ENCODE measurements at regions of chr19 and their contacts with region 1.

Region 1: GRCh38 chr19:29610563-29611271 is 4.6 kb downstream of the POP4 start:
- DNase-seq: peak; percentile 85
- ATAC-seq: peak; percentile 77 to 82

Region 2: GRCh38 chr19:29067831-29068230 is 542.9 kb before region 1 on chr19:
- intact Hi-C with region 1: no loop called
- DNase-seq: no peak
- ATAC-seq: no peak

Region 3: GRCh38 chr19:29690842-29691241 is 80.1 kb after region 1 on chr19:
- intact Hi-C with region 1: no loop called
- DNase-seq: no peak
- ATAC-seq: peak in 1 of 2 donors; percentile 10

Region 4: GRCh38 chr19:29714953-29715700 is 104.4 kb after region 1 on chr19 and contains the start of gene C19orf12:
- intact Hi-C with region 1: loop called (anchors 1 to 5 kb)
- DNase-seq: peak; percentile 71
- ATAC-seq: peak; percentile 86 to 91
- total RNA-seq, gene C19orf12: 48.2 to 52.0 TPM

Region 5: DNA sequence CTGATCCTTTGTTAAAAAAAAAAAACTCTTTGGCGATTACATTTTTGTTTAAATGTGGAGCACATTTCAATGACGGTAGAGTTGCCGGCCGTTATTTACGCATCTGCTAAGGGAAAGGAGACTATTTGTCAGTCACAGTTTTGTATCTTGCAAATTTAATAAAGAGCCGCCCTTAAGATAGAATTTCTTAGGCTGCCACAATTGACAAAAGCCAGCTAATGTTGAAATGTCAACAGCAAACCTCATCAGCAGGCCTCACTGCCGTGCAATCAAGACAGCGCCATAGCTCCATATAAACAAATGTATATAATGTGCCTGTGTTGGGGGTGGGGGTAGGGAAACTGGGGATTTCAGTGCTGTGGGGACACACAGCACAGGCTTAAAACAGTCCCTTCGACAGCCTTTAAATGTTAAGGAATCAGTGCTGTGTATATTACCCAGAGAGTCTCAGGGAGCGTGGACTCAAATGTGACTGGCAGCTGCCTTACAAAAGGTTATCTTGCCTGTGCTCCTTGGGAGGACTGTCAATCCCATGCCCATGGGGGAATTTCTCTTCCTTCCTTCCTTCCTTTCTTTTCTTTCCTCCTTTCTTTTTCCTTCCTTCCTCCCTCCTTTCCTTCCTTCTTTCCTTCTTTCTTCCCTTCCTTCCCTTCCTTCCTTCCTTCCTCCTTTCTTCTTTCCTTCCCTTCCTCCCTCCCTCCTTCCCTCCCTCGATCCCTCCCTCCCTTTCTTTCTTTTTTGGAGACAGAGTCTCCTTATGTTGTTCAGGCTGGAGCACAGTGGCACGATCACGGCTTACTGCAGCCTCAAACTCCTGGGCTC is 439.3 kb after region 1 on chr19:
- intact Hi-C with region 1: no loop called
- DNase-seq: no peak
- ATAC-seq: no peak